Caco-2 (cell line): ENCODE measurements at regions of chr2 and their contacts with region 1.

Region 1: DNA sequence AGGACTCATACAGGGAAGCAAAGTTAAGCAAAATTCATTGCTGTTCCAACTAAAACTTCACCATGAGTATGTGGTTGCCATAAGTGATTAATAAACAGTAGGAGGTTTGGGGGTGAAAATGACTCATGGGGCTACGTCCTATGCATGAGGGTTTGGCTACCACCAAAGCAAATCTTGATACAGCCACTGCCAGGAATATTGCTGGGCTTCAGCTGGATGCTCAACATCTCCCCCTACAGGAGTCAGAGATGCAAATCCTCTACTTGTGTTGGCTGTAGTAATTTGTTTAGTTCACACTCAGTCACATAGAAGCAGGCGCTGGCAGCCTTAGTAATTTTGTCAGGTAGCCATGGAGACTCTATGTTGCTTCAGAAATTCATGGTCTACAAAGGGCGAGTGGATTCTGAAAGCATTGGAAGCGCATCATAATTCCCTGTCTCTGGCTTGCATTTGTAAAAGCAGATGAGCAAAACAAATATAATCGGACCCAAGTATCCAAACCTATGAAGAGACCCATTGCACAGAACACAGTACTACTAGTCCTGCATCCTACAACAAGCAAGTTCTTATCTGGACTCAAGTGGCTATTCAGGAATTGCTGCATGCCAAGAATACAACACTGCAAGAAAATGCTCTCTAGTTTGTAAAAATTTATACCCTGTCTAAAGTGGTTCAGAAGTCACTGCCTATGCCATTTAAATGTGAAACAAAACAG is 76.0 kb downstream of the CD28 start:
- DNase-seq: peak; percentile 75 to 78
- H3K4me3 ChIP-seq: no peak overlapping the region
- H3K4me3 Mint-ChIP-seq: peak overlapping the region; percentile 37
- H3K27ac Mint-ChIP-seq: peak overlapping the region; percentile 96
- H3K4me1 ChIP-seq: peaks cover 44% of the 10 kb centered on the region
- H3K4me1 Mint-ChIP-seq: peaks cover 27% of the 10 kb centered on the region
- H3K27me3 ChIP-seq: no peaks in the 10 kb centered on the region
- H3K27me3 Mint-ChIP-seq: no peaks in the 10 kb centered on the region
- CTCF ChIP-seq: peak; percentile 68

Region 2: GRCh38 chr2:203535078-203535783 is 247.2 kb before region 1 on chr2 and contains the start of gene RAPH1:
- CTCF ChIA-PET with region 1: no interaction called
- POLR2A ChIA-PET with region 1: interaction called, 3 read pairs
- intact Hi-C with region 1: loop called (anchors 1 kb)
- DNase-seq: peak; percentile 92
- H3K4me3 ChIP-seq: peak within 1 kb of the TSS; percentile 84
- H3K4me3 Mint-ChIP-seq: peak within 1 kb of the TSS; percentile 97
- H3K27ac Mint-ChIP-seq: peak within 1 kb of the TSS; percentile 36
- H3K4me1 ChIP-seq: peaks cover 4% of the 10 kb centered on the region; the same call in 1 of the 2 replicates
- H3K4me1 Mint-ChIP-seq: peaks cover 14% of the 10 kb centered on the region
- H3K27me3 ChIP-seq: no peaks in the 10 kb centered on the region
- H3K27me3 Mint-ChIP-seq: no peaks in the 10 kb centered on the region
- CTCF ChIP-seq: no peak
- total RNA-seq, gene RAPH1: 109 and 114 TPM in 2 replicates

Region 3: DNA sequence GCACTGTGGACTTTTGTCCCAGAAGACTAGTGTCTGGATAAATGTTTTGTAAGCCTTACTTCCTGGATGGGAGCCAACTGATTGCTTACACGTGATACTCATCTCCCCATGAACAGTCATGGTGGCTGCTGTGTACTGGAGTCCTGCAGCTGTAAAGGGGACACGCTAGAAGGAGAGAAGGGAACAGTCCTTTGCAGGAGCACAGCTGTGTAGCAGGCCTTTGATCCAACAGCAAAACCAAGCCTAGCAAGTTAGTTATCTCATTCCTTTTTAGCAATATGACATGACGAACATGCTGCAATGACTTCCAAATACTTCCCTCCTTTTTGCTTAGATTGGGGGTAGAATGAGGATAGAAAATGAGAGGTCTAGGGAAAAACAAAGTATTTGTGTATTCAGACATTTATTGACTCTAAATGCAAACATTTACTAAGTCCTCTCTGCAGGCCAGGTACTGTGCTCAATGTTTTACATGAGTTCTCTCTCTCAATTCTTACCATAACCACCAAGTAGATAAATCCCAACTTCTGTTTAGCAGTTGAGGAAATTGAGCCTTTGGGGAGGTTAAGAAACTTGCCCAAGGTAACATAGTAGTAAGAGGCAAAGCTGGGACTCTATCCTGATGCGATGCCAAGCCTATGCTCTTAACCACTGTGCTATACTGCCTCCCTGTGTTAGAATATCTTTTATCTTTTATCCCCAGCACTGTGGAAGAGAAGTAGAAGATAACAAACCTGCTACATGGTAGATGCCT is 131.4 kb before region 1 on chr2:
- CTCF ChIA-PET with region 1: interaction called, 4 read pairs
- POLR2A ChIA-PET with region 1: no interaction called
- intact Hi-C with region 1: loop called (anchors 1 kb)
- DNase-seq: peak in 1 of 2 experiments; percentile 53
- H3K4me3 ChIP-seq: no peak overlapping the region
- H3K4me3 Mint-ChIP-seq: peak overlapping the region; percentile 24
- H3K27ac Mint-ChIP-seq: peak overlapping the region; percentile 89
- H3K4me1 ChIP-seq: peaks cover 51% of the 10 kb centered on the region
- H3K4me1 Mint-ChIP-seq: peaks cover 60% of the 10 kb centered on the region
- H3K27me3 ChIP-seq: no peaks in the 10 kb centered on the region
- H3K27me3 Mint-ChIP-seq: no peaks in the 10 kb centered on the region
- CTCF ChIP-seq: peak; percentile 24 to 37

Region 4: DNA sequence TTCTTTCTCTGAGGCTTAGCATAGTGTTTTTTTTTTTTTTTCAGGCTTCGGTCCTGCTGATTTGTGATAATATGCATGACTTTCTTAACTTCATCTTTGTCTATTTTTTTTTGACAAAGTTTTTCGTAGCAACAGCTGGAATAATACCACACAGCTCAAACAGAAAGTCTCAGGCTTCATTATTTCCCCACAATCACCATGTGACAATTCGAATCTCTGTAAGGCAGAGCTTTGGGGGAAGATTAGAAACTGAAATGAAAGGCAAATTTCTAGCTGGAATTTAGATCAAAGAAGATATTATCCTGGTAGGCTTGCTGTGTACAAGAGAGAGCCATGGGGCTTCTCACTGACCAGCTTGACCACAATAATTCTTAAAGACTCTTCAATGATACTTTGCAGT is 88.2 kb before region 1 on chr2:
- CTCF ChIA-PET with region 1: no interaction called
- POLR2A ChIA-PET with region 1: no interaction called
- intact Hi-C with region 1: loop called (anchors 2 kb)
- DNase-seq: no peak
- H3K4me3 ChIP-seq: no peak overlapping the region
- H3K4me3 Mint-ChIP-seq: no peak overlapping the region
- H3K27ac Mint-ChIP-seq: no peak overlapping the region
- H3K4me1 ChIP-seq: peaks cover 91% of the 10 kb centered on the region
- H3K4me1 Mint-ChIP-seq: peaks cover 62% of the 10 kb centered on the region
- H3K27me3 ChIP-seq: no peaks in the 10 kb centered on the region
- H3K27me3 Mint-ChIP-seq: no peaks in the 10 kb centered on the region
- CTCF ChIP-seq: no peak

Region 5: GRCh38 chr2:203740780-203741281 is 41.6 kb before region 1 on chr2:
- CTCF ChIA-PET with region 1: no interaction called
- POLR2A ChIA-PET with region 1: interaction called, 3 read pairs
- intact Hi-C with region 1: loop called (anchors 1 kb)
- DNase-seq: peak in 1 of 2 experiments; percentile 43
- H3K4me3 ChIP-seq: no peak overlapping the region
- H3K4me3 Mint-ChIP-seq: no peak overlapping the region
- H3K27ac Mint-ChIP-seq: peak overlapping the region; percentile 25
- H3K4me1 ChIP-seq: peaks cover 33% of the 10 kb centered on the region
- H3K4me1 Mint-ChIP-seq: peaks cover 6% of the 10 kb centered on the region
- H3K27me3 ChIP-seq: no peaks in the 10 kb centered on the region
- H3K27me3 Mint-ChIP-seq: no peaks in the 10 kb centered on the region
- CTCF ChIP-seq: no peak